Heart right ventricle (tissue), 16 donors: ENCODE measurements at regions of chr16 and their contacts with region 1.

Region 1: DNA sequence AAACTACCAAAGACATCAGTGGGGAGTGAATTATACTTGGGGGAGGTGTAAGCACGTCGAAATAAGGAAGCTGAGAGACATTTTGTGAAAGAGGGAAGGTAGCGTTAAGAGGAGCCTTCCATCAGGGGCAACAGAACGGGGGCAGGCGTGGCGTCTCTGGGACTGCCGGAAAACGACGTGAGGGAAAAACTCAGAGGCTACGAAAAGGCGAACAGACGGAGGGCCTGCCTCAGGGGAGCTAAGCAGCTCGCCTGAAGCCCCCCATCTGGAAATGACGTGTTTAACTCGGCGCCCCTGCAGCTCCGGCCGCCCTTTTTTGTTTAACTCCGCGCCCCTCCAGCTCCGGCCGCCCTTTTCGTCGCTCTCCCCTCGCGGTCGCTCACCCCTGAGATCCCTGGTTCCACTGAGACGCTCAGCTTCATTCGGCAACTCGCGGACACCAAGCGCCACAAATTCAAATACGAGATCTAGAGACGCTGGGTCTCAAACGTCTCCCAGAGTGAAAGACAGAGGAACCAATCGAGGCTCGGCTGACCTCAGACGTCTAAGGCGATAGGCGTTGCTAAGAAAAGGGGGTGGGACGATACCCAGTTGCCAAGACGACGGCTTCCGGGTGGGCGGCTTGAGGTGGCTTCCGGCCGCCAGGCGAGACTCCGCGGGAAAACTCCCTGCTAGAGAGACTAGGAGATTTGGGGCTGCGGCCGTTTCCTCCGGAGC is 383.3 kb downstream of the ZFHX3 start:
- DNase-seq: peak; percentile 88 to 98
- ATAC-seq: peak; percentile 100
- H3K4me3 ChIP-seq: peak overlapping the region; percentile 67 to 93 (median 74)
- H3K27ac ChIP-seq: peak overlapping the region in 4 of 10 donors; percentile 24 to 87 (median 32)
- H3K4me1 ChIP-seq: peaks cover 0 to 19% (median 10%) of the 10 kb centered on the region in 9 donors
- H3K27me3 ChIP-seq: peaks cover 0 to 4% (median 0%) of the 10 kb centered on the region in 7 donors
- CTCF ChIP-seq: peak in 1 of 9 donors; percentile 22

Region 2: GRCh38 chr16:72787514-72788268 is 123.0 kb after region 1 on chr16:
- intact Hi-C with region 1: loop called in 1 of 10 experiments (anchors 10 kb)
- DNase-seq: peak; percentile 35 to 53
- ATAC-seq: peak; percentile 59 to 92 (median 72)
- H3K4me3 ChIP-seq: peak overlapping the region in 9 of 10 donors; percentile 17 to 53 (median 46)
- H3K27ac ChIP-seq: peak overlapping the region in 8 of 10 donors; percentile 3 to 67 (median 52)
- H3K4me1 ChIP-seq: peaks cover 0 to 30% (median 5%) of the 10 kb centered on the region in 9 donors
- H3K27me3 ChIP-seq: no peaks in the 10 kb centered on the region
- CTCF ChIP-seq: no peak

Region 3: GRCh38 chr16:72829846-72830775 is 165.4 kb after region 1 on chr16:
- intact Hi-C with region 1: no loop called
- DNase-seq: no peak
- ATAC-seq: no peak
- H3K4me3 ChIP-seq: no peak overlapping the region
- H3K27ac ChIP-seq: no peak overlapping the region
- H3K4me1 ChIP-seq: peaks cover 0 to 28% (median 11%) of the 10 kb centered on the region in 9 donors
- H3K27me3 ChIP-seq: no peaks in the 10 kb centered on the region
- CTCF ChIP-seq: no peak

Region 4: GRCh38 chr16:73196670-73197069 is 532.0 kb after region 1 on chr16:
- intact Hi-C with region 1: loop called in 2 of 10 experiments (anchors 10 kb)
- DNase-seq: peak; percentile 48 to 67
- ATAC-seq: peak in 7 of 8 donors; percentile 61 to 94 (median 87)
- H3K4me3 ChIP-seq: no peak overlapping the region
- H3K27ac ChIP-seq: no peak overlapping the region
- H3K4me1 ChIP-seq: no peaks in the 10 kb centered on the region
- H3K27me3 ChIP-seq: peaks cover 0 to 1% (median 0%) of the 10 kb centered on the region in 7 donors
- CTCF ChIP-seq: peak; percentile 45 to 76 (median 70)